PC-9 (cell line): ENCODE measurements at regions of chr12 and their contacts with region 1.

Region 1: DNA sequence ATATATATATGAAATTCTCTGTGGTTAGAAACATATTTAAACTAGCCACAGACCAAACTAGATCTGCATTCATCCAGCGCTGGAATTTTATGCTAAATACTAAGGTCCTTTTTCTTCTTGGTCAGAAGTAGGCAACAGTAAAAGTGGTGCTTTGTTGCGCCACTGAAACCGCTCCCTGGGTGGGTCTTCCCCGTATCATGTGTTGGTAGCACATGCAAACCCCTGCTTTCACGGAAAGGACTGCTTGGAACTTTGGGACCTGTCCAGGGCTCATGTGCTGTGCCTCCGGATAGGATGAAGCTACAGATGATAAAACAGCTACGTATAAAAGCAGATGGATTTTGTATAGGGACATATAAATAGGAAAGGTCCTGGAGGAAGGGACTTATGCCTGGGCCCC is 40.1 kb upstream of the COL2A1 start:
- DNase-seq: no peak
- H3K4me3 ChIP-seq: no peak overlapping the region
- H3K27ac ChIP-seq: no peak overlapping the region
- H3K4me1 ChIP-seq: peaks cover 29% of the 10 kb centered on the region
- H3K27me3 ChIP-seq: no peaks in the 10 kb centered on the region
- CTCF ChIP-seq: no peak

Region 2: DNA sequence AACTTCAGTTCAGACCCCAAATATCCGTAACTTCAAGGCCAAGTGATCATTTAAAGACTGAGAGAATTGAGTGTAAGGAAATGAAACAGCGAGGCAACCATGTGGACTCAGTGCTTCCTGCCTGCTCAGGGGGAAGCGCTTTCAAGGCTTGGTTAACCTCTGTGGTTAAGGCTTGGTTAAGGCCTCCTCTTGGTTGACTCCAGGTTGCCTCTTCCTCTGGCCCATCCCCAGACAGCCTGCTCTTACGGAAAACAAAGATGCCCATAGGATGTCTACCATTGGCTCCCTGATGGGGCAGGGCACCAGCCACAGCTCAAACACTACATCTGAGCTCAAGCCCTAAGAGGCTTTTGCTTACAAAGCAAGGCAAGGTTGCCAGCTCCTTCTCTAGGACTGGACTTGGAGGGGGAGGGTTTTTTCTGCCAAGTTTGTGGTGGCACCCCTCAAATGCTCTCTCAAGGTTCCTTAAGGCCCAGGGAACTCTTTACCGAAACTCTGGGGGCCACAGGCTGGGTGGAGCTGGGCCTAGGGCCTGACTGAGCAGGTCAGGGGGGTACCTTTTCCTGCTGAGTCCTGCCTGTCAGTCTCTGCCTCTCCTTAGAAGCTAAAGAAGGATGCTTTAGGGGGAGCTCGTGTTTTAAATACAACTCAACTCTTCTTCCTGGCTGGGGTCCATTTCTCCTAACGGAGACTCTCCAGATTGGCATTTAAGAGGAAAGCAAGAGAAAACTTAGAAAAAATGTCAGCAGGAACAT is 53.9 kb before region 1 on chr12:
- CTCF ChIA-PET with region 1: no interaction called
- POLR2A ChIA-PET with region 1: no interaction called
- intact Hi-C with region 1: no loop called
- DNase-seq: no peak
- H3K4me3 ChIP-seq: no peak overlapping the region
- H3K27ac ChIP-seq: no peak overlapping the region
- H3K4me1 ChIP-seq: no peaks in the 10 kb centered on the region
- H3K27me3 ChIP-seq: peaks cover 78% of the 10 kb centered on the region
- CTCF ChIP-seq: no peak

Region 3: DNA sequence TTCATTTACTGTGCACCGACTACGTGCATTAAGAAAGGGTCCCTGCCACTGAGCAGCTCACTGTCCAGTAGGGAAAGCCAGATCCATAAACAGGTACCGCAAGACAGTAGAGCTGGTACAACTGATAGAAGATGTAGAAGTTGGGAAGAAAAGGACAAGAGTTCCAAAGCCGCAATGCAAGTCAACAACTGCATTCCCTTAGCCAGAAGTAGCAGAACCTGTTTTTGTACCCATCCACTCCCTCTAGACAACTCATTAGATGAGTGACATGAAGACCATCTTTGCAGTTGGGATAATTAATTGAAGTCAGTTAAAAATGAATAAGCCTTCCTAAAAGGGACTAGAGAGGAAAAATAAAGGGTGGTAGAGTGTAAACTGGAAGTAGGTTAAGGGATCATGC is 60.2 kb after region 1 on chr12:
- CTCF ChIA-PET with region 1: no interaction called
- POLR2A ChIA-PET with region 1: no interaction called
- intact Hi-C with region 1: no loop called
- DNase-seq: no peak
- H3K4me3 ChIP-seq: peak overlapping the region; percentile 76
- H3K27ac ChIP-seq: no peak overlapping the region; the same call in 1 of the 2 replicates
- H3K4me1 ChIP-seq: peaks cover 22% of the 10 kb centered on the region
- H3K27me3 ChIP-seq: no peaks in the 10 kb centered on the region
- CTCF ChIP-seq: no peak

Region 4: DNA sequence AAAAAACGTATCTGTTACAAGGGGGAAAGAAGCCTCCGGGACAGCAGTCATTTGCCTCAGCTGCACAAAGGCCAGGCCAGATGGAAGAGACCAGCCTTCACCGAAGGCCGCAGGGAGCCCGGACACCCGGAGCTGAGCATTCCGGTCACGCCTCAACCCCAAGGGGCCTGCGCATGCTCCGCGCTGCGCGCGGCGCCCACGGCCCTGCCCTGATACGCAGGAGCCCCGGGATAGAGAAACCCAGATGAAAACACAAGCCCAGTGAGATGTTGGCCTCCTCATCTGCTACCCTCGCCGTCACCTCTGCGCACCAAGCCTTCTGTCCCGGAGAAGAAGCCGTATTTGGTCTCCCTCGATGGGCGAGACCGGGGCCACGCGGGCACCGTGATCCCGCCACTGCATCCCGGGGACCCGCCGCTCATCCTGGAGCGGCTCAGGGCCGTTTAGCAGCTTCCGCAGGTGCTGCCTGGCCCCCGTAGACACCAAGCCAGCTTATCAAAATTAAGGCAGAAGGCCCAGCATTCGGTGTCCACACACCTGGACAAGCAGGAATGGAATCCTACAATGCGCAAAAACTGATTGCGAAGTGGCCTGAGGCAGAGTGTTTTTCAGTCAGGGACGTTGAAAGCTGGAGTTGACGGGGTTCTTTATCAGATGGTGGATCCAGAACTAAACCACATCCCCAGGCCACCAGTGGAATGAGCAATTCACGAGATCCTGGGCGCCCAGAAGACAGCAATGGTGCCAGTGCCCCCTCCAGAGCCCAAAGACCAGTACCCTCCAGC is 483.7 kb after region 1 on chr12:
- CTCF ChIA-PET with region 1: interaction called, 16 read pairs
- POLR2A ChIA-PET with region 1: no interaction called
- intact Hi-C with region 1: no loop called
- DNase-seq: no peak
- H3K4me3 ChIP-seq: no peak overlapping the region
- H3K27ac ChIP-seq: no peak overlapping the region
- H3K4me1 ChIP-seq: no peaks in the 10 kb centered on the region
- H3K27me3 ChIP-seq: peaks cover 30% of the 10 kb centered on the region
- CTCF ChIP-seq: no peak